Gastrocnemius medialis (tissue), 4 donors: ENCODE measurements at regions of chr3 and their contacts with region 1.

Region 1: DNA sequence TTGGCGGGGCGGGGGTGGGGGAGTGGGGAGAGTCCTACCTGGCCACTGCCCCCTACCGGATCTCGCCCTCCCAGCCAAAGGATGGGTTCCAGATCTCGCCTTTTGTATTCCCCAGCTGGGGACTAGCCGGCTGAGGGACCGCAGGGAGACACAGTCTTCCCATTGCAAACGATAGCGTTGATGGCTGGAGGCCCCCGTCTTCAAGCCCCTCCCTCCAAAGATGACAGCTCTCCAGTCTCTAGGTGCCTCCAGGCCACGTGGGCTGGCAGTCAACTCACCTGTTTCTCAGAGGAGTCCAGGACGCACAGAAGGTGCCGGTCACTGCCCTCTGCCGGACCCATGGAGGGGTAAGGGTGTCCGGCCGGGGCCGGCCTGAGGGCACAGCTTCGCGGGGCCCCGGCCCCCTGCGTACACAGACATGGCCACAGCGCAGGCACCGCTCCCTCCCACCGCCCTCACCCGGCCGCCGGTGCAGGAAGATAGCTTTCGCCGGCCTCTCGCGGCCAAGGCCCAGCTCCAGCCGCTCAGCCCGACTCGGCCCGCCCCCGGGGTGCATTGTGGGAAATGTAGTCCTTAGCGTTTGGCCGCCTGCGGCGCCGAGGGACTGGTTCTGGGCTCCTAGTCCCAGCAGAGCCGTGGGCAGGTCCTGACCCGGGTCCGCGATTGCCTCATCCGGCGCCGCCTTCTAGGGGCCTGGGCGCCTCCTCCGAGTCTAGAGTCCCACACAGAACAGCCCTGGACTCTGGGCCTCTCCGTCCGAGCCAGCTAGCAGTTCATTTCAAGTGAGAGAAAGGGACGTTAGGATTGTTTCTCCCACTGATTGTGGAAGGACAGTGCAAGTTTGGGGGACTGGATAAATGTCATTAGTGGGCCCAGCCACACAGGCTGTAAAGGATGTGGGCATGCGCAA is at the start of gene MON1A:
- DNase-seq: peak; percentile 90 to 94
- ATAC-seq: peak; percentile 94 to 95
- H3K4me3 ChIP-seq: peak within 1 kb of the TSS; percentile 60 to 98 (median 80)
- H3K27ac ChIP-seq: peak within 1 kb of the TSS; percentile 86 to 98 (median 93)
- H3K4me1 ChIP-seq: peaks cover 20 to 31% of the 10 kb centered on the region in 2 donors
- H3K27me3 ChIP-seq: no peaks in the 10 kb centered on the region
- CTCF ChIP-seq: peak in 4 of 5 experiments; percentile 32 to 46 (median 38)
- POLR2A ChIP-seq: peak; percentile 81 to 88
- total RNA-seq, gene MON1A: 13.9 to 41.9 (median 23.9) TPM

Region 2: DNA sequence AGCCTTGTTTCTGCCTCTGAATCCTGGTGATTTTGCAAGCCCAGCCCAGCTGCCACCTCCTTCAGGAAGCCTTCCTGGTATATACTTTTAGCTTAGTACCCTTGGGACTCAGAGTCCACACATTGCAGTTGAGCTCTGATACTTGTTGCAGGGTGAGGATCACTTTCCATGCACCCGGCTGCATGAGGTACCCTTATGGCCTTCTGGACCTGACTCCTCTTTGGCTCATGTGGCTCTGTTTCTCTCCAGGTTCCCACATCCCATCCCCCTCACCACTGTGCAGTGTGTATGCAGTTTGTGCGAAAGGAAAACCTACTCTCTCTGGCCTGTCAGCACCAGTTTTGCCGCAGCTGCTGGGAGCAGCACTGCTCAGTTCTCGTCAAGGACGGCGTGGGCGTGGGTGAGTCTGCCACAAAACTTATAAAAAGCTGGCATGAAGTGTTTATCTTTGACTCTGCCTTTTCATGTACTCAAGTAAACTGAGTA is 962.7 kb before region 1 on chr3:
- in situ Hi-C with region 1: no loop called
- intact Hi-C with region 1: no loop called
- DNase-seq: peak in 1 of 2 donors; percentile 74
- ATAC-seq: peak; percentile 62 to 85
- H3K4me3 ChIP-seq: no peak overlapping the region
- H3K27ac ChIP-seq: peak overlapping the region; percentile 19 to 72 (median 40)
- H3K4me1 ChIP-seq: peaks cover 15 to 21% of the 10 kb centered on the region in 2 donors
- H3K27me3 ChIP-seq: no peaks in the 10 kb centered on the region
- CTCF ChIP-seq: no peak
- POLR2A ChIP-seq: no peak

Region 3: GRCh38 chr3:49553692-49554632 is 375.6 kb before region 1 on chr3 and contains the start of gene BSN:
- in situ Hi-C with region 1: no loop called
- intact Hi-C with region 1: loop called (anchors 1 kb)
- DNase-seq: peak; percentile 67 to 84
- ATAC-seq: peak; percentile 85 to 92
- H3K4me3 ChIP-seq: peak within 1 kb of the TSS; percentile 80 to 95 (median 83)
- H3K27ac ChIP-seq: peak within 1 kb of the TSS; percentile 76 to 91 (median 82)
- H3K4me1 ChIP-seq: peaks cover 14 to 15% of the 10 kb centered on the region in 2 donors
- H3K27me3 ChIP-seq: no peaks in the 10 kb centered on the region
- CTCF ChIP-seq: no peak
- POLR2A ChIP-seq: peak in 1 of 2 donors; percentile 55
- total RNA-seq, gene BSN: 0.10 to 0.24 (median 0.21) TPM

Region 4: GRCh38 chr3:49786241-49786958 is 143.2 kb before region 1 on chr3 and contains the start of gene IP6K1:
- in situ Hi-C with region 1: no loop called
- intact Hi-C with region 1: loop called (anchors 5 kb)
- DNase-seq: peak; percentile 100
- ATAC-seq: peak; percentile 99 to 100
- H3K4me3 ChIP-seq: peak within 1 kb of the TSS; percentile 77 to 93 (median 86)
- H3K27ac ChIP-seq: peak within 1 kb of the TSS; percentile 90 to 97 (median 94)
- H3K4me1 ChIP-seq: peaks cover 10 to 21% of the 10 kb centered on the region in 2 donors
- H3K27me3 ChIP-seq: no peaks in the 10 kb centered on the region
- CTCF ChIP-seq: no peak
- POLR2A ChIP-seq: peak; percentile 60 to 79
- total RNA-seq, gene IP6K1: 13.5 to 22.2 (median 19.5) TPM

Region 5: GRCh38 chr3:49856181-49857005 is 73.2 kb before region 1 on chr3 and contains the start of gene TRAIP:
- in situ Hi-C with region 1: no loop called
- intact Hi-C with region 1: loop called (anchors 1 kb)
- DNase-seq: peak; percentile 87 to 93
- ATAC-seq: peak; percentile 100
- H3K4me3 ChIP-seq: peak within 1 kb of the TSS; percentile 64 to 86 (median 68)
- H3K27ac ChIP-seq: peak within 1 kb of the TSS; percentile 80 to 90 (median 88)
- H3K4me1 ChIP-seq: peaks cover 7% of the 10 kb centered on the region in 2 donors
- H3K27me3 ChIP-seq: no peaks in the 10 kb centered on the region
- CTCF ChIP-seq: no peak
- POLR2A ChIP-seq: peak; percentile 19 to 29
- total RNA-seq, gene TRAIP: 0.36 to 4.2 (median 1.1) TPM

Region 6: GRCh38 chr3:49939858-49940666 is 10.5 kb after region 1 on chr3 and contains the start of gene RBM6:
- in situ Hi-C with region 1: no loop called
- intact Hi-C with region 1: loop called (anchors 1 kb)
- DNase-seq: peak; percentile 97 to 98
- ATAC-seq: peak; percentile 96 to 97
- H3K4me3 ChIP-seq: peak within 1 kb of the TSS; percentile 65 to 81 (median 78)
- H3K27ac ChIP-seq: peak within 1 kb of the TSS; percentile 89 to 95 (median 95)
- H3K4me1 ChIP-seq: peaks cover 12 to 20% of the 10 kb centered on the region in 2 donors
- H3K27me3 ChIP-seq: no peaks in the 10 kb centered on the region
- CTCF ChIP-seq: peak in 2 of 5 experiments; percentile 20 to 28
- POLR2A ChIP-seq: peak; percentile 95 to 97
- total RNA-seq, gene RBM6: 27.2 to 55.6 (median 30.6) TPM

Region 7: GRCh38 chr3:50298836-50299637 is 369.5 kb after region 1 on chr3 and contains the starts of genes HYAL3 and NAA80:
- in situ Hi-C with region 1: loop called in 1 of 4 experiments (anchors 25 kb)
- intact Hi-C with region 1: no loop called
- DNase-seq: peak; percentile 99 to 100
- ATAC-seq: peak; percentile 87
- H3K4me3 ChIP-seq: peak within 1 kb of the TSS; percentile 66 to 91 (median 76)
- H3K27ac ChIP-seq: peak within 1 kb of the TSS; percentile 85 to 91 (median 88)
- H3K4me1 ChIP-seq: peaks cover 29 to 48% of the 10 kb centered on the region in 2 donors
- H3K27me3 ChIP-seq: no peaks in the 10 kb centered on the region
- CTCF ChIP-seq: peak; percentile 43 to 62 (median 51)
- POLR2A ChIP-seq: peak; percentile 94 to 96
- total RNA-seq, gene HYAL3: 1.1 to 2.3 (median 1.2) TPM in 3 of 4 donors, not detected in the other
- total RNA-seq, gene NAA80: 12.5 to 22.1 (median 14.8) TPM